ENCODE measurements at regions of chr22 and their contacts with region 1.

Region 1: GRCh38 chr22:37457093-37457893 is 28.9 kb downstream of the MFNG start:
- DNase-seq: peak; percentile 84
- H3K4me3 ChIP-seq: no peak overlapping the region
- H3K27ac ChIP-seq: no peak overlapping the region
- H3K4me1 ChIP-seq: peaks cover 0 to 4% (median 0%) of the 10 kb centered on the region in 4 donors
- H3K27me3 ChIP-seq: peaks cover 7% of the 10 kb centered on the region
- CTCF ChIP-seq: peak; percentile 76 to 96 (median 90)
- EP300 ChIP-seq: no peak
- POLR2A ChIP-seq: no peak

Region 2: GRCh38 chr22:37316875-37317371 is 140.4 kb before region 1 on chr22:
- in situ Hi-C with region 1: loop called in 1 of 4 experiments (anchors 10 kb)
- intact Hi-C with region 1: loop called (anchors 2 kb)
- DNase-seq: peak; percentile 76
- H3K4me3 ChIP-seq: no peak overlapping the region
- H3K27ac ChIP-seq: no peak overlapping the region
- H3K4me1 ChIP-seq: no peaks in the 10 kb centered on the region
- H3K27me3 ChIP-seq: no peaks in the 10 kb centered on the region
- CTCF ChIP-seq: peak; percentile 76 to 94 (median 91)
- EP300 ChIP-seq: no peak
- POLR2A ChIP-seq: no peak

Region 3: GRCh38 chr22:37571258-37571991 is 114.1 kb after region 1 on chr22:
- in situ Hi-C with region 1: no loop called
- intact Hi-C with region 1: no loop called
- DNase-seq: no peak
- H3K4me3 ChIP-seq: no peak overlapping the region
- H3K27ac ChIP-seq: peak overlapping the region; percentile 80 to 99 (median 86)
- H3K4me1 ChIP-seq: peaks cover 30 to 50% (median 44%) of the 10 kb centered on the region in 4 donors
- H3K27me3 ChIP-seq: no peaks in the 10 kb centered on the region
- CTCF ChIP-seq: no peak
- EP300 ChIP-seq: no peak
- POLR2A ChIP-seq: no peak